ENCODE measurements at regions of chr2 and their contacts with region 1.

Region 1: GRCh38 chr2:68653538-68653982 is 10.2 kb downstream of the PROKR1 start:
- DNase-seq: peak; percentile 78
- H3K4me3 Mint-ChIP-seq: peak overlapping the region; percentile 0
- H3K27ac Mint-ChIP-seq: peak overlapping the region; percentile 63
- H3K4me1 Mint-ChIP-seq: peaks cover 43% of the 10 kb centered on the region
- H3K27me3 Mint-ChIP-seq: peaks cover 18% of the 10 kb centered on the region

Region 2: DNA sequence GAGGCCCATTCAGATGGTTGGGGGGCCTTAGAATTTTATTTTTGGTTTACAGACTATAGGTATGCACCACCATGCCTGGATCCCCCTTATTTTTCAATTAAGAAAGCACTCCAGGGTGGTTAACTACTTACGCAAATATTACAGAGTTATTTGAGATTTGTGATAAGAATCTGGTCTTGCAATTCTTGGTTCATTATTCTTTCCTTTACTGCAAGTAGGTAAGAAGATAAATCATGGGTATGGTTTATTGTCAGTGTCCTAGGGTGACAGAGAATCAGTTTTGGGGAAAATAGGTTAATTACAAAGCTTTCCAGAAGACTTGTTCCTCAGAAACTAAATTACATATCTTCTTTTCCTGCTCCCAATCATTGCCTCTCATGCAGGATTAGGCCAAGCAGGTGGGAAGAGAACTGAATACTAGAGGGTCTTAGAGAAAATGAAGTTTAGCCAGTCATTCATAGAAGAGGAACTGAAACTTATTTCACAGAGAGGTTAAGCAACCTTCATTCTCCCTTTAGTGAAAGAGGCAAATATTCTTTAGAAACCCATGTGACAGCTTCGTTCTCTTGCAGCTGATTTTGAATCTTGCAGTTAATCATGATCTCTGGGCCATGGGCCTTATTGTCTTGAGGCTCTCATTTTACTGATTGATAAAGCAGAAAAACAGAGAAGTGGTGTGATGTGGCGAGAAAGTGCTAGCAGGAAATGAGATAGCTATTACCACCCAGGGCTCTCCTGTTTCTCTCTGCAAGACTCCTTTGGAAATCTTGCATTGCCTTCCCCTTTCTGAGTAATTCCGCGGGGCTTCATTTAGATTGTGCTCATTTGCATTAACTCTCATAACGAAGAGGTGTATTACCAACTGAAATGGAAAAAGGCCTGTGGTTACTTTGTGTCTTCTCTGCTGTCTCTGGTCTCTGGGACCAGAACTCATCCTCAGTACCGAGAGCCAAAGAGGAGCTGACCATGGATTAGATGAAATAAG is 36.3 kb after region 1 on chr2:
- CTCF ChIA-PET with region 1: interaction called, 4 read pairs
- intact Hi-C with region 1: loop called (anchors 1 kb)
- DNase-seq: peak; percentile 31
- H3K4me3 Mint-ChIP-seq: no peak overlapping the region
- H3K27ac Mint-ChIP-seq: peak overlapping the region; percentile 52
- H3K4me1 Mint-ChIP-seq: peaks cover 21% of the 10 kb centered on the region
- H3K27me3 Mint-ChIP-seq: no peaks in the 10 kb centered on the region

Region 3: GRCh38 chr2:68742626-68743415 is 89.3 kb after region 1 on chr2:
- CTCF ChIA-PET with region 1: no interaction called
- intact Hi-C with region 1: loop called (anchors 1 kb)
- DNase-seq: peak; percentile 45
- H3K4me3 Mint-ChIP-seq: no peak overlapping the region
- H3K27ac Mint-ChIP-seq: peak overlapping the region; percentile 91
- H3K4me1 Mint-ChIP-seq: peaks cover 93% of the 10 kb centered on the region
- H3K27me3 Mint-ChIP-seq: no peaks in the 10 kb centered on the region

Region 4: GRCh38 chr2:68776124-68776523 is 122.6 kb after region 1 on chr2:
- CTCF ChIA-PET with region 1: no interaction called
- intact Hi-C with region 1: no loop called
- DNase-seq: peak; percentile 30
- H3K4me3 Mint-ChIP-seq: peak overlapping the region; percentile 68
- H3K27ac Mint-ChIP-seq: peak overlapping the region; percentile 87
- H3K4me1 Mint-ChIP-seq: peaks cover 79% of the 10 kb centered on the region
- H3K27me3 Mint-ChIP-seq: no peaks in the 10 kb centered on the region

Region 5: GRCh38 chr2:68828887-68829708 is 175.5 kb after region 1 on chr2:
- CTCF ChIA-PET with region 1: no interaction called
- intact Hi-C with region 1: loop called (anchors 5 kb)
- DNase-seq: peak; percentile 85
- H3K4me3 Mint-ChIP-seq: peak overlapping the region; percentile 22
- H3K27ac Mint-ChIP-seq: peak overlapping the region; percentile 77
- H3K4me1 Mint-ChIP-seq: peaks cover 60% of the 10 kb centered on the region
- H3K27me3 Mint-ChIP-seq: no peaks in the 10 kb centered on the region

Measured in activated naive CD4-positive, alpha-beta T cell treated with anti-CD3 and anti-CD28 coated beads for 36 hours (primary cell).